ENCODE measurements at regions of chr18 and their contacts with region 1.

Region 1: GRCh38 chr18:62425465-62426195 is 97.2 kb upstream of the ZCCHC2 start:
- DNase-seq: peak; percentile 90
- ATAC-seq: peak; percentile 89
- H3K4me3 ChIP-seq: peak overlapping the region; percentile 23 to 39
- H3K27ac ChIP-seq: peak overlapping the region; percentile 27; the same call in 1 of the 2 replicates
- H3K4me1 ChIP-seq: peaks cover 7 to 21% of the 10 kb centered on the region in 2 experiments
- H3K27me3 ChIP-seq: no peaks in the 10 kb centered on the region
- CTCF ChIP-seq: peak; percentile 79 to 95 (median 80)
- POLR2A ChIP-seq: no peak
- RAD21 ChIP-seq: peak; percentile 93

Region 2: DNA sequence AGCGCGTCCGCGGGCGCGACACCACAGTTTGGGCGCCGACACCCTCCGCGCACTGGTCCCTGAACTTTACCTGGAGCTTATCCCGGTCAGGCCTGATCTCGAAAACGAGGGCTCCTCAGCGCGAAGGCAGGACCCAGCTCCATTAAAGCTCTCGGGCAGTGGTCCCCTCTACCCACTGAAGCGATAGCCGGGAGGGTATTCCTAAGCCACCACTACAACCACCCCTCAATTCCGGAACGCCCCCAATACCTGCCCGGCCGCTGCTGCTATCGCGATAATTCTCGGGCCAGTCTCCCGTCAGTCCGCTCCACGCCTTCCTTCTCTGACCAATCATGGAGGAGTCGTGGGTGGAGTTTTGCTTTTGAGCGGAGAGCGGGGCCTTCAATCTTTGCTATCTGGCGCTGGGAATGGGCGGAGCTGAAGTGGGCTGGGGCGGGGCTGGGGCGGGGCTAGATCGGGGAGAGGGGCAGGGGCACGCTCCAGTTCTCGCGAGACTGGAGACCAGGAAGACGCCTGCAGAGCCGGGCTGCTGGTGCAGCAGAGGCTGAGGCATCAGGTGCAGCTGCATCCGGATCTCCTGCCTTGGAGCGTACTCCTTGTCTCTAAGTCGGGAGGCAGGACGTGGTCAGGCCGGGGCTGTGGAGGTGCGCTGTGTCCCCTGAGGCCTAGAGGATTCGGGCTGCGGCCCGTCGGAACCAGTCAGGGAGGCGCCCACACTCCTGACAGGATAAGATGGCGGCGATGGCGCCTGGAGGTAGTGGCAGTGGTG is 238.7 kb before region 1 on chr18 and contains the starts of genes PIGN and RELCH:
- CTCF ChIA-PET with region 1: interaction called, 3 read pairs
- POLR2A ChIA-PET with region 1: no interaction called
- RAD21 ChIA-PET with region 1: no interaction called
- intact Hi-C with region 1: loop called (anchors 1 kb)
- DNase-seq: peak; percentile 97
- ATAC-seq: peak; percentile 91
- H3K4me3 ChIP-seq: peak within 1 kb of the TSS; percentile 89 to 96
- H3K27ac ChIP-seq: peak within 1 kb of the TSS; percentile 74
- H3K4me1 ChIP-seq: peaks cover 7 to 14% of the 10 kb centered on the region in 2 experiments; a peak in 3 of 4 replicates
- H3K27me3 ChIP-seq: no peaks in the 10 kb centered on the region
- CTCF ChIP-seq: no peak
- POLR2A ChIP-seq: peak; percentile 60
- RAD21 ChIP-seq: no peak
- total RNA-seq, gene PIGN: 12.2 TPM
- total RNA-seq, gene RELCH: 17.4 TPM

Region 3: GRCh38 chr18:62258616-62259015 is 167.0 kb before region 1 on chr18:
- CTCF ChIA-PET with region 1: no interaction called
- POLR2A ChIA-PET with region 1: no interaction called
- RAD21 ChIA-PET with region 1: no interaction called
- intact Hi-C with region 1: no loop called
- DNase-seq: no peak
- ATAC-seq: no peak
- H3K4me3 ChIP-seq: no peak overlapping the region
- H3K27ac ChIP-seq: no peak overlapping the region
- H3K4me1 ChIP-seq: no peaks in the 10 kb centered on the region
- H3K27me3 ChIP-seq: no peaks in the 10 kb centered on the region
- CTCF ChIP-seq: no peak
- POLR2A ChIP-seq: no peak
- RAD21 ChIP-seq: no peak

Region 4: DNA sequence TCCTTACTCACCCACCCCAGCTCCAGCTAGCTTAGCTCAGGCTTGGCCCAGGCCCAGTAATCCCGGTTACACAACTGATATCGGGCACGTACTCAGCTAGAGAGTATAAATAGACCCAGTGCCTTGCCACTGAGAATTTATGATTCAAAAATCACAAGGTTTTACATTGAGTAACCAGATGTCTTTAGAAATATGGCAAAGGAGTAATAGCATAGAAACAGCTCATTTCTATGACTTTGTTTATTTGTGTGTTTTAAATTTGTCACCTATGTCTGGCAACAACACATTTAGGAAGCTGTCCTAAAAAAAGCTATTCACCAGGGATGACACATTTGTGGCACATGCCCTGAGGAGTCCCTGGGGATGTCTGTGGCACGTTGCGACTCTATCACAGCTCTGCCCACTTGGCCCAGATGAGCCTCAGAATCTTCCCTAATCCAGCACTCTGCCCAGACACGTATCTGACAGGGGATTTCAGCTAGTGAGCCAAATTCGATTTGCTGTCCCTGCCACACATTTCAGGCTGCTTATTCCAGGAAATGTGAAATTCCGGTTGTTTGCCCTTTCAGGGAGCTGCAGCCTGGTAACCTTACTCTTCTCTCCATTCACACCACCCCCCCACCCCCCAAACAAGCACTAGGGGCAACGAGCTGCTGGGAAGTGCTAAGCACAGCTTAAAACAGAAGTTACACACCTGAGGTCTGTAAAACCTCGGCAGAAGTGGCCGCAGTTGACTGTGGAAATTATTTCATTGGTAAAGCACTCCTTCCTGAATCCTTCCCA is 11.8 kb after region 1 on chr18:
- CTCF ChIA-PET with region 1: interaction called, 19 read pairs
- POLR2A ChIA-PET with region 1: no interaction called
- RAD21 ChIA-PET with region 1: no interaction called
- intact Hi-C with region 1: no loop called
- DNase-seq: no peak
- ATAC-seq: 0 out of 2 replicates have a peak, but pooled peaks have one; percentile 17
- H3K4me3 ChIP-seq: no peak overlapping the region
- H3K27ac ChIP-seq: no peak overlapping the region
- H3K4me1 ChIP-seq: peaks cover 0 to 20% of the 10 kb centered on the region in 2 experiments; a peak in 2 of 4 replicates
- H3K27me3 ChIP-seq: no peaks in the 10 kb centered on the region
- CTCF ChIP-seq: no peak
- POLR2A ChIP-seq: no peak
- RAD21 ChIP-seq: no peak

Region 5: DNA sequence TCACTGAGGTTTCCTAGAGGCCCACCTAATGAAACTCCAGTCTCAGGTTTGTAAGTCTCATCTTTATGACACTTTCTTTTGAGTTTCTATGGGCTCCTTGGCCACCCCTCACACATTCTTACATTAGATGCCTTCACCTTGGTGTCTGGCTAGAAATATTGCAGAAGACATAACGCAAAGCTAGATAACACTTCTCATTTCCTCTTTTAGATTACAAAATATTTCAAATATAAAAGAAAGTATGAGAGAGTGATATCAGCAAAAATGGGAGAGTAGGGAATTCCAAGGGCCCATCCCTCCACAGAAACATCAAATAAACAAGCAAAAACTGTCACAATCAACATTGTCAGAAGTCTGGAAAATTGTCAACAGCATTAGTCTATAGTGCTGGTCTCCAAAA is 53.9 kb after region 1 on chr18:
- CTCF ChIA-PET with region 1: no interaction called
- POLR2A ChIA-PET with region 1: no interaction called
- RAD21 ChIA-PET with region 1: no interaction called
- intact Hi-C with region 1: no loop called
- DNase-seq: no peak
- ATAC-seq: no peak
- H3K4me3 ChIP-seq: no peak overlapping the region
- H3K27ac ChIP-seq: no peak overlapping the region
- H3K4me1 ChIP-seq: peaks cover 0 to 5% of the 10 kb centered on the region in 2 experiments; a peak in 3 of 4 replicates
- H3K27me3 ChIP-seq: no peaks in the 10 kb centered on the region
- CTCF ChIP-seq: no peak
- POLR2A ChIP-seq: no peak
- RAD21 ChIP-seq: no peak

Region 6: DNA sequence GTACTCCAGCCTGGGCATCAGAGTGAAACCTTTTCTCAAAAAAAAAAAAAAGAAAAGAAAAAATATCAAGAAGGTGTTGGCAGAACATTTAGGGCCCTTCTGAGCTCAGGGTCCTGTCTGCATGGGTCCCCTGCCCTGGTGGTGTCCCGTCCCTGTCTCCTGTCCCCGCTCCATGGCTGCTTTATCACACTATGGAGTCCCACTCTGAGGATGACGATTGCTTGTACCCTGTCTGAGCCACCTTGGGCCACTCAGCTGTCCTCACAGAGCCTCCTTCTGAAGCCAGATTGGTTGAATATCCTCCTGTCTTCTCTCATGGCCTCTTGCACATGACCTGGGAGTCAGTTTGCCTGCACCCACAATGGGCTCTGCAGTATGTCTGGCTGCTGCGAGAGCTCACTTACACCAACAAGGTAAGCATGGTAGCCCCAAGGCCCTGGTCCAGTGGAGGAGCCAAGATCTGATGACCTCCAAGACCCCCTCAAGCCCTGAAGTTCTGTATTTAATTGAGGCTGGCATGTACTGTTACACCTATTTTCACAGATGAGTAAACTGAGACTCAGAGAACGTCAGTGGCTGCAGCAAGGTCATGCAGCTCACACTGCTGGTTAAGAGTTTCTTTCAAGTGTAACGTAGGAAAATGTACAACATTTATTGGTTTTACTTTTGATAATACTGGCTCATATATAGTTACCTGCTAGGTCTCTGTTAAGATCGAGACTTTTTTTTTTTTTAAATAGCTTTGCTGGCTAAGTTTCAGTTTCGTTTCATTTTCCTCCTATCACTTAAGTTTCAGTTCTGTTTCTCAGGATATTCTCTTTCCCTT is 80.3 kb after region 1 on chr18:
- CTCF ChIA-PET with region 1: no interaction called
- POLR2A ChIA-PET with region 1: no interaction called
- RAD21 ChIA-PET with region 1: no interaction called
- intact Hi-C with region 1: no loop called
- DNase-seq: no peak
- ATAC-seq: no peak
- H3K4me3 ChIP-seq: no peak overlapping the region
- H3K27ac ChIP-seq: no peak overlapping the region
- H3K4me1 ChIP-seq: peaks cover 0 to 5% of the 10 kb centered on the region in 2 experiments; a peak in 1 of 4 replicates
- H3K27me3 ChIP-seq: no peaks in the 10 kb centered on the region
- CTCF ChIP-seq: no peak
- POLR2A ChIP-seq: no peak
- RAD21 ChIP-seq: no peak

Region 7: DNA sequence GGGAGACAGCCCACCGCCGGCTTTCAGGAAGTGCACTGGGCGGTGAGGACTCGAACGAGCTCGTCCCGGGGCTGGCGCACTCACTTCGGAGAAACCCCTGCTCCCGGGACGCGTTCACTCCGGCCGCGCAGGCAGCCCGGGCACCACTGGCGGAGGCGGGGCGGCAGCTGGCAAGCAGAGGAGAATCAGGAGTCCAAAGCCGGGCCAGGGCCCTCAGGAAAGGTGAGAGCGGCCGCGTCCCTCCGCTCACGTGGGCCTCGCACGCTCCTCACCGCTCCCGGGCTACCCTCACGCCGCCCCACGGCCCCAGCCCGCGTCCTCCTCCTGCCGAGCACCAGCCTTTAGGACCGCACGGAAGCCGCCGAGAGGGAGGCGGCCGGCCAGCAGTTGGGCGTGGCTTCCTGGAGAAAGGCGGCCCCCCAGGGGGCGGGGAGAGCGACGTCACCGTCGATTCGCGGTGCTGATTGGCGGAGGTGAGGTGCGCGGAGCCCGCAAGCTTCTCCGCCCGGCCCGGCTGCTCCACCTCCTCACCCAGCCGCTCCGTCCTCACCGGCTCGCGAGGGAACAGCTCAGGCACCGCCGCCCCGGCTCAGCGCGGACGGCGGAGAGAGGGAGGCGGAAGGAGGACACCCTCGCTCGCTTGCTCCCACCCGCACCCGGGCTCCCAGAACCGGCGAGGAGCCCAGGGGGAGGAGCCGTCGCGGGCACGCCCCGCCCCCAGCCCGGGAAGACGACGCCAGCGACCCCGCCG is 97.0 kb after region 1 on chr18 and contains the start of gene ZCCHC2:
- CTCF ChIA-PET with region 1: interaction called, 5 read pairs
- POLR2A ChIA-PET with region 1: interaction called, 6 read pairs
- RAD21 ChIA-PET with region 1: interaction called in 1 of 2 experiments, 6 read pairs
- intact Hi-C with region 1: loop called (anchors 1 kb)
- DNase-seq: peak; percentile 94
- ATAC-seq: peak; percentile 83
- H3K4me3 ChIP-seq: peak within 1 kb of the TSS; percentile 76 to 83
- H3K27ac ChIP-seq: peak within 1 kb of the TSS; percentile 98
- H3K4me1 ChIP-seq: peaks cover 21 to 34% of the 10 kb centered on the region in 2 experiments
- H3K27me3 ChIP-seq: no peaks in the 10 kb centered on the region
- CTCF ChIP-seq: no peak
- POLR2A ChIP-seq: peak; percentile 58
- RAD21 ChIP-seq: no peak
- total RNA-seq, gene ZCCHC2: 17.7 TPM

Region 8: GRCh38 chr18:62566199-62566598 is 140.6 kb after region 1 on chr18:
- CTCF ChIA-PET with region 1: interaction called, 6 read pairs
- POLR2A ChIA-PET with region 1: no interaction called
- RAD21 ChIA-PET with region 1: no interaction called
- intact Hi-C with region 1: loop called (anchors 5 kb)
- DNase-seq: no peak
- ATAC-seq: no peak
- H3K4me3 ChIP-seq: no peak overlapping the region
- H3K27ac ChIP-seq: no peak overlapping the region
- H3K4me1 ChIP-seq: no peaks in the 10 kb centered on the region
- H3K27me3 ChIP-seq: no peaks in the 10 kb centered on the region
- CTCF ChIP-seq: peak in 2 of 3 experiments; percentile 19 to 21; a peak in 2 of 6 replicates
- POLR2A ChIP-seq: no peak
- RAD21 ChIP-seq: peak; percentile 35; the same call in 1 of the 2 replicates

Region 9: GRCh38 chr18:62584241-62585120 is 158.9 kb after region 1 on chr18:
- CTCF ChIA-PET with region 1: interaction called, 20 read pairs
- POLR2A ChIA-PET with region 1: no interaction called
- RAD21 ChIA-PET with region 1: interaction called in 1 of 2 experiments, 9 read pairs
- intact Hi-C with region 1: loop called (anchors 1 kb)
- DNase-seq: peak; percentile 76
- ATAC-seq: peak; percentile 90
- H3K4me3 ChIP-seq: no peak overlapping the region
- H3K27ac ChIP-seq: no peak overlapping the region
- H3K4me1 ChIP-seq: peaks cover 0 to 8% of the 10 kb centered on the region in 2 experiments; a peak in 2 of 4 replicates
- H3K27me3 ChIP-seq: no peaks in the 10 kb centered on the region
- CTCF ChIP-seq: peak; percentile 96 to 99 (median 98)
- POLR2A ChIP-seq: no peak
- RAD21 ChIP-seq: peak; percentile 92

Region 10: GRCh38 chr18:62982600-62983251 is 557.1 kb after region 1 on chr18:
- CTCF ChIA-PET with region 1: interaction called, 7 read pairs
- POLR2A ChIA-PET with region 1: no interaction called
- RAD21 ChIA-PET with region 1: no interaction called
- intact Hi-C with region 1: loop called (anchors 2 kb)
- DNase-seq: peak; percentile 32
- ATAC-seq: peak; percentile 78
- H3K4me3 ChIP-seq: no peak overlapping the region
- H3K27ac ChIP-seq: no peak overlapping the region
- H3K4me1 ChIP-seq: no peaks in the 10 kb centered on the region
- H3K27me3 ChIP-seq: no peaks in the 10 kb centered on the region
- CTCF ChIP-seq: peak; percentile 77 to 87 (median 79)
- POLR2A ChIP-seq: no peak
- RAD21 ChIP-seq: peak; percentile 90